Panc1 (cell line): ENCODE measurements at regions of chr7 and their contacts with region 1.

Region 1: GRCh38 chr7:3285652-3286051 is 15.4 kb upstream of the SDK1 start:
- DNase-seq: no peak
- ATAC-seq: peak; percentile 31; the same call in 1 of the 2 replicates
- H3K4me3 ChIP-seq: no peak overlapping the region
- H3K27ac ChIP-seq: peak overlapping the region; percentile 26; the same call in 1 of the 2 replicates
- H3K4me1 ChIP-seq: no peaks in the 10 kb centered on the region
- H3K27me3 ChIP-seq: no peaks in the 10 kb centered on the region
- CTCF ChIP-seq: no peak

Region 2: DNA sequence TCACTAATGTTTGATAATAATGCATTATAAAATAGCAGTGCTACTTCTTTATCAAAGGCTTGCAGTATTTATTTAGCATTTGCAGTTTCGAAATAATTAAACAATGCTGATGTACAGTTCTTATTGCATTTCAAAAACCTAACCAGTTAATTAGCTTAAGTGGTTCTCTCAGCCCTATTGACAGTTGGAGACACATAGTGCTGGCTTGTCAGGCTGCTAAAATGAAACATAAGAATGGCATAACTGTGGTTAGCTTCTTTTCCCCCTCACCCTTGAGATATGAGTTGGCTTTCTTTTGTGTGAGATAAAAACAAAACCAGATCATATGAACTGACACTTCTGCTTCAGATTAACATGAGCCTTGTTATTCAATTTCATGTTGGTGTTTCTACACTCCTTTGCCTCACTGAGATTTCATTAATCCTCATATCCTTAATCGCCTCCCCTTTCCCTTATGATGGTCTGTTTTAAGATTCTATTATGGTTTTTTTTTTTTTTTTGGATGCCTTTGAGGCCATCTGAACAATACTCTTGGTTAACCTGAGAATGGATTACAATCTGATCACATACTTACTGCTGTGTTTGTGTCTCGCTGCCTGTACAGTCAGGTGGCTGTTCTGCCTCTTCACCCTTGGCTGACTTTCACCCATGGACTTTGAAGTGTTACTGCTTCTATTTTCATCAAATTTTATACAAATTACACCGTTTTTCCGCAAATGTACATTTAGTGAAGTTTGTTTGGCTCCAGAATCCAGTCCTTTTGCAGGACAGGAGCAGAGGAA is 123.4 kb after region 1 on chr7:
- CTCF ChIA-PET with region 1: no interaction called
- POLR2A ChIA-PET with region 1: no interaction called
- in situ Hi-C with region 1: no loop called
- intact Hi-C with region 1: no loop called
- DNase-seq: no peak
- ATAC-seq: no peak
- H3K4me3 ChIP-seq: no peak overlapping the region
- H3K27ac ChIP-seq: no peak overlapping the region
- H3K4me1 ChIP-seq: peaks cover 51% of the 10 kb centered on the region
- H3K27me3 ChIP-seq: no peaks in the 10 kb centered on the region
- CTCF ChIP-seq: no peak

Region 3: DNA sequence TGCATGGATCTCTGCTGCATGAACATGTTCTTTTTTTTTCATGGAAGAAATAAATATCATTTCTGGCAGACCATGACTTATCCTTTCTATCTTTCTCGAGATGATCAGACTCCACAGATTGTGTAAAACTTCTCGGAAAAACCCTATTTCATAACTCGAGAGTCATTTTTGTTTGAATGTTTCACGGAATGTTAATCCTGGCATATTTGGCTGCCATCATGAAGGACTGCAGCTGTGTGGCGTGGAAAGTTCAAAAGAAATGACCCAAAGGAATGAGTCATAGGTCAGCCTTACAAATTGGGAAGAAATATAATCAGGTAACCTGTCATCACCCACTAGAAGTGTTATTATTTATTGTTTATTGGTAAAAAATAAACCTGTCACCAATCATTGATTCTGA is 582.2 kb after region 1 on chr7:
- CTCF ChIA-PET with region 1: no interaction called
- POLR2A ChIA-PET with region 1: interaction called, 10 read pairs
- in situ Hi-C with region 1: no loop called
- intact Hi-C with region 1: no loop called
- DNase-seq: no peak
- ATAC-seq: no peak
- H3K4me3 ChIP-seq: no peak overlapping the region
- H3K27ac ChIP-seq: no peak overlapping the region
- H3K4me1 ChIP-seq: no peaks in the 10 kb centered on the region
- H3K27me3 ChIP-seq: no peaks in the 10 kb centered on the region
- CTCF ChIP-seq: no peak